Right ventricle myocardium superior (tissue), 1 donor: ENCODE measurements at regions of chr11 and their contacts with region 1.

Region 1: DNA sequence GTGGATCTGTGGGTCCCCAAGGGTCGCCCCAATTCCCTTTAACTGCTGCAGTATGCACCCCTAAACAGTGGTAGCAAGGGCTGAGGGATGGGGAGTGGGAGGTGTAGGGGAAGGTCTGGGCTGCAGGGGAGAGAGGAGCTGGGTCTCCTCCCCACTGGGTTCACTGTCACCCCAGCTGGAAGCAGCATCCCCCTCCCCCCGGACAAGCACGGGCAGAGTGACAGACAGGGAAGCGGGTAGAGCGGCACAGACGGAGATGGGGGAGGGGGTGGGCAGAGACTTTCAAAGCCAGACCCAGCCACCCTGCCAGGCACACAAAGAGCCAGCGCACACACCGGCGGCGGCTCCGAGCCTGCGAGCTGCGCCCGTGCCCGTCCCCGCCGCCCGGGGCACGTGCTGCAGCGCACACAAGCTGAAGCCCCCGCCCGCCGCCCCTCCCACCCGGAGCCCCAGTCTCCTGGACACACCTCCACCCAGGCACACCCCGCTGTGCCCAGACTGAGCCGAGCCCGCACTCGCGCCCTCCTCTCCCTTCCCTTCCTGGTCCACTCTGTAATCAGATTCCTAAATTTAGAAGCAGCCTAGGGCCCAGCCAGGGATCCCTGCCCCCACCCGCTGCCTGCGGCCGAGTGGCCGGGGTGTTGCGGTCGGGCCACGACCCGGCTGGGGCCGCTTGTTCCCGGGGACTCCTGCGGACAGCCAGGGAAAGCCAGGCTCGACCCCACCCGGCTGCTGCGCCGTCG is 899 bp upstream of the RCOR2 start:
- DNase-seq: peak; percentile 88
- ATAC-seq: peak; percentile 59

Region 2: DNA sequence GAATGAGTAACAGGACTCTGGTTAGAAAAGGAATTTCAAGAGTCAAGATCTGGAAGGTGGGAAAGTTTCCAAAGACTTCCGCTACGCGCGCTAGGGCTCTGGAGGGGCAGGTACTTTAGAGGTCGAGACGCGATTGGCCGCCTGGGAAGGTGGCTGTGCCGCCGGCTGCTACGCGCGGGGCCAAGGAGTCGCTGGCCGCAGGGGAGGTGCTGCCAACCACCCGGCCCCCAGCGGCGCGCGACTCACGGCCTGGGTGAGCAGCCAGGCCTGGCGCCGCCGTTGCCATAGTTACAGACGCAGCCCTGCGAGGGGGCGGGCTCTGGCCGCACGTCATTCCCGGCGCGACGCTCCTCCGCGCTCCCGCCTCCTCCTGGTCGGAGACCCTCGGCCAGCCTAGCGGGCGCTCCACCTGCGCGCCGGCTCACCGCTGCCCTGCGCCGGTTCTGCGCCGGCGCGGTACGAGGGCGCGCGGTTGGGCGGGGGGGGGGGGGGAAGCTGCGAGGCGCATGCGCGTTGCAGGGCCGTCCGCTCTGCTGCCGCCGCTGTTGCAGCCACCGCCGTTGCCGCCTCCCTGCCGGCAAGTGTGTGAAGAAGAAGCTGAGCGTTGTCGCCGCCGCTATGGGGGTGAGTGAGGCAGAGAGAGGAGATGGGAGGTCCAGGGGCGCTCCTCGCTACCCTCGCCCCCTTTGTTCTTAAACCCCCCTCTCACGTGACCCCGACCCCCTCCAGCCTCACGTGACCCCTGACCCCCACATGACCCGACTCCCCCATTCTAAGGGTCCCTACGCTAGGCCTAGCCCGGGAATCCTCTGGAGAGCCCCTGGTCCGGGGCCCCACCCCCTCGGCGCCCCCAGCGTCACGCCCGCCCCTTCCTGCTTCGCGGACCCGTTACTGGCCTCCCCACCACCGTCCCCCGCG is 20.9 kb after region 1 on chr11 and contains the start of gene NAA40:
- intact Hi-C with region 1: loop called (anchors 2 kb)
- DNase-seq: peak; percentile 93
- ATAC-seq: peak; percentile 96
- total RNA-seq, gene NAA40: 20.9 TPM